Gastrocnemius medialis (tissue), 4 donors: ENCODE measurements at regions of chr13 and their contacts with region 1.

Region 1: GRCh38 chr13:77492982-77493381 is 42.5 kb upstream of the SCEL start:
- DNase-seq: no peak
- ATAC-seq: peak in 1 of 2 donors; percentile 33
- H3K4me3 ChIP-seq: no peak overlapping the region
- H3K27ac ChIP-seq: no peak overlapping the region
- H3K4me1 ChIP-seq: no peaks in the 10 kb centered on the region
- H3K27me3 ChIP-seq: no peaks in the 10 kb centered on the region
- CTCF ChIP-seq: peak in 2 of 5 experiments; percentile 39 to 43
- POLR2A ChIP-seq: no peak

Region 2: DNA sequence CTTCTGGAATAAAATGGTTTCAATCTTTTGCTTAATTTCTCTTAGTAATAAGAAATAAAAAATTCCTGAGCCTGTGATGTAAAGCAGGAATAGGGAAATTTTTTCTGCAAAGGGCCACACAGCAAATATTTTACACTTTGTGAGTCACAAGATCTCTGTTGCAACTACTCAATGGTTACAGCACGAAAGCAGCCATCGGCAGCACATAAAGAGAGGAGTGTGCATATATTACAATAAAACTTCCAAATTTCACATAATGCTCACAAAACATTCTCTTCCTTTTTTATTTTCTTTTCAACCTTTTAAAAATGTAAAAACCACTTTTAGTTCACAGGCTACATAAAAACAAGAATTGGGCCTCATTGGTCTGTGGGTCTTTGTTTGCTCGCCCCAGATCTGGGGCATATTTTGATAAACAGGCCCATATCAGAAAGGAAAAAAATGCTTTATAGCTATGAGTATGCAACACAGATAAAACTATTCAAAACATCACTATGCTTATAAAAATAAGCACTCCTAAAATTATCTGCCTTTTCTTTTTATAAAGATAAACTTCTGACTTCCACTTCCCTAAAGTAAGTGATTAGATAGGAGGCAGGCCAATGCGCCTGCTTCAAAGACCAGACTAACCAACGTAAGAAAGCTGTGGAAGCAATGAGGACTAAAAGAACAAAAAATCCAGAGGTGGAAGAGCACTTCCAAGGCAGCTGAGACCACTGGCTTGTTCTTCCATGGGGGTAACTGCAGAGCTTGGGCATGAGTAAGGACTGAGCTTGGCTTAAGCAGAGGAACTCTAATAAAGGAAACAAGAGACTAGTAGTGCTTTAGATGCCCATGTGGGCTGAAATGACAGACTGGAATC is 192.6 kb before region 1 on chr13:
- in situ Hi-C with region 1: loop called in 1 of 4 experiments (anchors 25 kb)
- intact Hi-C with region 1: no loop called
- DNase-seq: no peak
- ATAC-seq: peak in 1 of 2 donors; percentile 14
- H3K4me3 ChIP-seq: no peak overlapping the region
- H3K27ac ChIP-seq: no peak overlapping the region
- H3K4me1 ChIP-seq: peaks cover 7 to 40% of the 10 kb centered on the region in 2 donors
- H3K27me3 ChIP-seq: no peaks in the 10 kb centered on the region
- CTCF ChIP-seq: no peak
- POLR2A ChIP-seq: no peak

Region 3: GRCh38 chr13:77751513-77752456 is 258.8 kb after region 1 on chr13:
- in situ Hi-C with region 1: loop called in 2 of 4 experiments (anchors 10 to 25 kb)
- intact Hi-C with region 1: loop called (anchors 5 kb)
- DNase-seq: no peak
- ATAC-seq: peak; percentile 58 to 68
- H3K4me3 ChIP-seq: no peak overlapping the region
- H3K27ac ChIP-seq: no peak overlapping the region
- H3K4me1 ChIP-seq: no peaks in the 10 kb centered on the region
- H3K27me3 ChIP-seq: no peaks in the 10 kb centered on the region
- CTCF ChIP-seq: peak; percentile 33 to 78 (median 52)
- POLR2A ChIP-seq: no peak

Region 4: GRCh38 chr13:77853703-77854102 is 360.7 kb after region 1 on chr13:
- in situ Hi-C with region 1: no loop called
- intact Hi-C with region 1: no loop called
- DNase-seq: no peak
- ATAC-seq: no peak
- H3K4me3 ChIP-seq: no peak overlapping the region
- H3K27ac ChIP-seq: no peak overlapping the region
- H3K4me1 ChIP-seq: no peaks in the 10 kb centered on the region
- H3K27me3 ChIP-seq: no peaks in the 10 kb centered on the region
- CTCF ChIP-seq: no peak
- POLR2A ChIP-seq: no peak